ENCODE measurements at regions of chr3 and their contacts with region 1.

Region 1: GRCh38 chr3:85255949-85256348 is 297.2 kb downstream of the CADM2 start:
- DNase-seq: no peak
- ATAC-seq: no peak
- H3K4me3 ChIP-seq: no peak overlapping the region
- H3K27ac ChIP-seq: no peak overlapping the region
- H3K4me1 ChIP-seq: no peaks in the 10 kb centered on the region
- H3K27me3 ChIP-seq: no peaks in the 10 kb centered on the region
- CTCF ChIP-seq: no peak
- POLR2A ChIP-seq: no peak

Region 2: DNA sequence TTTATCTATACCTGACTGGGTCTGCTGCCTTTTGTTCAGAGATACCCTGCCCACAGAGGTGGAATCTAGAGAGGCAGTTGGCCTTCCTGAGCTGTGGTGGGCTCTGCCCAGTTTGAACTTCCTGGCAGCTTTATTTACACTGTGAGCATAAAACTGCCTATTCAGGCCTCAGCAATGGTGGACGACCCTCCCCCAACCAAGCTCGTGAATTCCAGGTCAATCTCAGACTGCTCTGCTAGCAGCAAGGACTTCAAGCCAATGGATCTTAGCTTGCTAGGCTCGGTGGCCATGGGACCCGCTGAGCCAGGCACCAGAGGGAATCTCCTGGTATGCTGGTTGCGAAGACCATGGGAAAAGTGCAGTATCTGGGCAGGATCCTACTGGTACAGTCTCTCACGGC is 27.0 kb before region 1 on chr3:
- intact Hi-C with region 1: loop called in 1 of 10 experiments (anchors 2 kb)
- DNase-seq: no peak
- ATAC-seq: no peak
- H3K4me3 ChIP-seq: no peak overlapping the region
- H3K27ac ChIP-seq: no peak overlapping the region
- H3K4me1 ChIP-seq: no peaks in the 10 kb centered on the region
- H3K27me3 ChIP-seq: no peaks in the 10 kb centered on the region
- CTCF ChIP-seq: no peak
- POLR2A ChIP-seq: no peak